Activated B cell treated with CpG ODN at 0.5 μM for 24 hours (primary cell): ENCODE measurements at regions of chr9 and their contacts with region 1.

Region 1: GRCh38 chr9:5186416-5187169 is 1.2 kb upstream of the INSL6 start:
- DNase-seq: no peak
- ATAC-seq: peak; percentile 81
- H3K4me3 Mint-ChIP-seq: no peak overlapping the region
- H3K27ac Mint-ChIP-seq: no peak overlapping the region
- H3K4me1 Mint-ChIP-seq: peaks cover 12% of the 10 kb centered on the region
- H3K27me3 Mint-ChIP-seq: no peaks in the 10 kb centered on the region
- CTCF ChIP-seq: no peak

Region 2: DNA sequence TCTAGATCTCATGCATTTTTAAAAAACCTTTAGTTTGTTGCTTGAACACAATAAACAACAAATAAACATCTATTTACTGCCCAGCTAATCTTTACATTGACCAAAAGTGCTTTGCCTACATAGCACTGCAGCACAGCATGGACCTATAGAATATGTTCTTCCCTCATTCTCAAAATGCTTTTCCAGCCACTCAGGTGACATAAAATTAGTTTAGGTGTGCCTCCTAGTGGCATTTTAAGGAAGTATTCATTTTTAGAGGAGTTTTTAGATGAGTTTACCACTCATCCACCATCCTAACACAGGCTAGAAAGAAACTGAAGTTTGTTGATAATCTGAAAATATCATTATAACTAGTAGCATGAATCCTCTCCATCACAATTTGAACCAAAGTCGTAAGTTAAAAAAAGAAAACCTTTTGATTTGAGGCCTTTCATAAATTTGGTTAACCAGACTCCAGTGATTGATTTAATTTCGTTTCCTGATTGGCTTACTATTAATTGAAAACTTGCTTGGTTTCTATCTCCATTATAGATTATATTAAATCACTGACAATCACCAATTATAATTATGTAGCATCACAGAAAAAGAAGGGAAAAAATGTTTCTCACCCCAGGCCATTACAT is 238.5 kb after region 1 on chr9:
- CTCF ChIA-PET with region 1: interaction called, 15 read pairs
- POLR2A ChIA-PET with region 1: no interaction called
- intact Hi-C with region 1: loop called (anchors 1 kb)
- DNase-seq: no peak
- ATAC-seq: no peak
- H3K4me3 Mint-ChIP-seq: no peak overlapping the region
- H3K27ac Mint-ChIP-seq: no peak overlapping the region
- H3K4me1 Mint-ChIP-seq: peaks cover 14% of the 10 kb centered on the region
- H3K27me3 Mint-ChIP-seq: no peaks in the 10 kb centered on the region
- CTCF ChIP-seq: no peak

Region 3: DNA sequence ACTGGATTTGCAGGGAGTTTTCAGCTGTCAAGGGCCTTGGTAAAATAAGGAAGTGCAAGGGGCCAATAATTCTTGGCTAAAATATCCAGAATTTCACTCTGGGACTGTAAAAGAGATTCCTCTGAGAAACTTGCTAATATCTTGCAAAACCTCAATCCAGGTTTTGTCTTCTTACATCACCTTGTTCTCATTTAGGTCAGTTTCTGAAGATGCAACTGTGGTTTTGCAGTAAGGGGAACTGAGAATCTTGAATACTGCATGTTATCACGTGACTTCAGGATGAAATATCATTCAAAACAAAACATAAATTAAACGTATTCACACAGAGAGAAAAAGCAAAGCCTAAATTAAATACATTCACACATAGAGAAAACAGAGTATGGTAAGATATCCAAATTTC is 407.3 kb after region 1 on chr9:
- CTCF ChIA-PET with region 1: interaction called, 81 read pairs
- POLR2A ChIA-PET with region 1: interaction called, 4 read pairs
- intact Hi-C with region 1: loop called (anchors 1 kb)
- DNase-seq: no peak
- ATAC-seq: peak; percentile 32
- H3K4me3 Mint-ChIP-seq: peak overlapping the region; percentile 70
- H3K27ac Mint-ChIP-seq: peak overlapping the region; percentile 98
- H3K4me1 Mint-ChIP-seq: peaks cover 94% of the 10 kb centered on the region
- H3K27me3 Mint-ChIP-seq: no peaks in the 10 kb centered on the region
- CTCF ChIP-seq: no peak

Region 4: GRCh38 chr9:5832543-5833529 is 646.2 kb after region 1 on chr9 and contains the start of gene ERMP1:
- CTCF ChIA-PET with region 1: interaction called, 3 read pairs
- POLR2A ChIA-PET with region 1: no interaction called
- intact Hi-C with region 1: loop called (anchors 2 kb)
- DNase-seq: peak; percentile 88
- ATAC-seq: peak; percentile 88
- H3K4me3 Mint-ChIP-seq: peak within 1 kb of the TSS; percentile 90
- H3K27ac Mint-ChIP-seq: peak within 1 kb of the TSS; percentile 83
- H3K4me1 Mint-ChIP-seq: peaks cover 33% of the 10 kb centered on the region
- H3K27me3 Mint-ChIP-seq: no peaks in the 10 kb centered on the region
- CTCF ChIP-seq: peak; percentile 22
- total RNA-seq, gene ERMP1: 7.3 and 7.5 TPM in 2 replicates

Region 5: GRCh38 chr9:6055213-6055612 is 868.6 kb after region 1 on chr9:
- CTCF ChIA-PET with region 1: interaction called, 4 read pairs
- POLR2A ChIA-PET with region 1: no interaction called
- intact Hi-C with region 1: loop called (anchors 10 kb)
- DNase-seq: no peak
- ATAC-seq: peak; percentile 23
- H3K4me3 Mint-ChIP-seq: no peak overlapping the region
- H3K27ac Mint-ChIP-seq: no peak overlapping the region
- H3K4me1 Mint-ChIP-seq: peaks cover 19% of the 10 kb centered on the region
- H3K27me3 Mint-ChIP-seq: peaks cover 3% of the 10 kb centered on the region
- CTCF ChIP-seq: no peak